ENCODE measurements at regions of chr6 and their contacts with region 1.

Region 1: DNA sequence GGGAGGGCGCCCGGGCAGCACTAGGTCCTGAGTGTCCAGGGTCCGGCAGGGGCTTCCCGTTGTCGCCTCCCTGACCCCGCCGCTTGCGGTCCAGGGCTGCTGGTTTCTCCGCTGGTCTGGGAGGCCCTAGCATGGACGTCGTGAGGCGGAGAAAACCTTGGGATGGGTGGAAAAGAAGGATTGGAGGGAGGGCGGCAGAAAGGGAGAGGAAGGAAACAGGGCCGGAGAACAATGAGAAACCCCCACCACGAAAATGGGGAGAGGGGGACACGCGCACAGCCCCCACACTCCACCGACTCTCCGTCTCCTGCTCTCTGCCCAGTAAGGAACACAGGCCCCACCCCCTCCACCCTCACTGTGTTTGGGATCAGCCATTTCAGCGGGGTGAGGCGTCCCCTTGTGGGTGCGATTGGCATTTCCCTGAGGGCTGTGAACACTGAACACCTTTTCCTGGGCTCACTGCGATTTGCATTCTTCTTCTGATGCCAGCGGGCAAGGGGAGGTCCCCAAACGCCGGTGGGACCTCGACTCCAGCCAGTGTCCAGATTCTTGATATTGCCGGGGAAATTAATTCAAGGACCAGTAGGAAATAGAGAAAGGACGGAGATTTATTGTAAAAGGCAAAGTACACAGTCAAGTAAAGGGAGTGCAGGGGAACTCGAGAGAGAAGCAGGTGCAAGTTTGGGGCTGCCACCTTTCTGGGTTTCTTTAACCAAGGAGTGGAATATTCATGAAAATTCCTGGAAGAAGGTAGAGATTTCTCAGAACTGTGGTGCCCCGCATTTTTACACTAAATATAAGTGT is 3.3 kb upstream of the RAET1G start:
- DNase-seq: peak; percentile 69
- H3K4me3 Mint-ChIP-seq: peak overlapping the region; percentile 28
- H3K27ac Mint-ChIP-seq: no peak overlapping the region
- H3K4me1 Mint-ChIP-seq: peaks cover 15% of the 10 kb centered on the region
- H3K27me3 Mint-ChIP-seq: peaks cover 87% of the 10 kb centered on the region

Region 2: DNA sequence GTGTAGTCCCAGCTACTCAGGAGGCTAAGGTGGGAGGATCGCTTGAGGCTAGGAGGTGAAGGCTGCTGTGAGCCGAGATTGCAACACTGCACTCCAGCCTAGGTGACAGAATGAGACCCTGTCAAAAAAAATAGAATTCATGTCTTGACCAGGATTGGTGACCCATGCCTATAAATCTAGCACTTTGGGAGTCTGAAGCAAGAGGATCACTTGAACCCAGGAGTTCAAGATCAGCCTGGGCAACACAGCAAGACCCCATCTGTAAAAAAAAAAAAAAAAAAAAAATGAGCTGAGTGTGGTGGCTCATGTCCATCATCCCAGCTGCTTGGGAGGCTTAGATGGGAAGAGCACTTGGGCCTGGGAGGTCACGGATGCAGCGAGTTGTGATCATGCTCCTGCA is 325.7 kb before region 1 on chr6:
- intact Hi-C with region 1: no loop called
- DNase-seq: no peak
- H3K4me3 Mint-ChIP-seq: no peak overlapping the region
- H3K27ac Mint-ChIP-seq: no peak overlapping the region
- H3K4me1 Mint-ChIP-seq: no peaks in the 10 kb centered on the region
- H3K27me3 Mint-ChIP-seq: no peaks in the 10 kb centered on the region

Region 3: DNA sequence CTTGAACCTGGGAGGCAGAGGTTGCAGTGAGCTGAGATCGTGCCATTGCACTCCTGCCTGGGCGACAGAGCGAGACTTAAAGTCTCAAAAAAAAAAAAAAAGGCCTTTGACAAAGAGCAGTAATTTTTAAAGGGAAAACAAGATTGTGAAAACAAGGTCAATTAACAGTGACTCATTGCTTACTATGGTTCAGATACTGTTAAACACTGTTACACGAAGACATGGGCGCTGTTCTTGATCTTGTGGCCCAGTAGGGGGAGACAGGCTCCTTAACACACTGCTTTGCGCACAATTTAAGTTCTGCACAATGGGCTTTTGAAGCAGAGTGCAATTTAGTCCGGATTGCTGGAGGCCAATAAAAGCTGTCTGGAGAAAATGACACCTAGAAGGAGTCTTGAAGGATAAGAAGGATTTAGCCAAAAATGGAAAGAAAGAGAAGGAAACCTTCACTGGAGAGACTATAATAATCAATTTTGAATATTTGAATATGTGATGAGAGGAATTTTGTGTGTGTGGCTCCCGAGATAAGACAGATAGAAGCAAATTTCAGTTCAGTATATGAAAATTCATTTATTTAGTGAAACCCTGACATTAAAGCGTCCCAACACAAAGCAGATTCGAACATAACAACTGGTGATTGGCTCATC is 202.3 kb before region 1 on chr6:
- intact Hi-C with region 1: loop called (anchors 1 kb)
- DNase-seq: peak; percentile 17
- H3K4me3 Mint-ChIP-seq: no peak overlapping the region
- H3K27ac Mint-ChIP-seq: no peak overlapping the region
- H3K4me1 Mint-ChIP-seq: peaks cover 23% of the 10 kb centered on the region
- H3K27me3 Mint-ChIP-seq: no peaks in the 10 kb centered on the region

Region 4: GRCh38 chr6:149834513-149835481 is 91.4 kb before region 1 on chr6:
- intact Hi-C with region 1: loop called (anchors 1 kb)
- DNase-seq: peak; percentile 60
- H3K4me3 Mint-ChIP-seq: no peak overlapping the region
- H3K27ac Mint-ChIP-seq: no peak overlapping the region
- H3K4me1 Mint-ChIP-seq: peaks cover 5% of the 10 kb centered on the region
- H3K27me3 Mint-ChIP-seq: peaks cover 3% of the 10 kb centered on the region

Region 5: GRCh38 chr6:149840345-149841075 is 85.7 kb before region 1 on chr6:
- intact Hi-C with region 1: loop called (anchors 1 kb)
- DNase-seq: peak; percentile 26
- H3K4me3 Mint-ChIP-seq: no peak overlapping the region
- H3K27ac Mint-ChIP-seq: no peak overlapping the region
- H3K4me1 Mint-ChIP-seq: no peaks in the 10 kb centered on the region
- H3K27me3 Mint-ChIP-seq: peaks cover 11% of the 10 kb centered on the region